AG04449 (cell line): ENCODE measurements at regions of chr4 and their contacts with region 1.

Region 1: GRCh38 chr4:47122592-47123291 is 91.4 kb downstream of the GABRB1 start:
- DNase-seq: no peak
- H3K4me3 ChIP-seq: no peak overlapping the region
- CTCF ChIP-seq: peak; percentile 79

Region 2: DNA sequence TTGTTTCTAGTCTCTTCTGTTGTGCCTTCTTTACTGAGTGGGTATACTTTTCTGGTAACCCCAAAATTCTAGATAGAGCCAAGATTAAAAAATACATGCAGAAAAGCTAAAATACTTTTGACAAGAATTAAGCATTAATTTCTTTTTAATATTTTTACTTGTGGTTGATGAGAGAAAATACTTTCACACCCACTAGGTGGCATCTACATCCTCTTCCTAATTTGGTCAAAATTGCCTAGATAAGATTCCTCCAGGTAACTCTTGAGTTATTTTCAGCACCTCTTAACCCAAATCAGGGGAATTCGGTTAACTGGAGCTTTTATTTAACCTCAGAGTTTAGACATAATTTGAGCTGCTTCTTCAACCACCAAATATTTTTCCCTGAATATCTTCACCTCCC is 185.2 kb before region 1 on chr4:
- CTCF ChIA-PET with region 1: interaction called, 15 read pairs
- POLR2A ChIA-PET with region 1: no interaction called
- DNase-seq: no peak
- H3K4me3 ChIP-seq: no peak overlapping the region
- CTCF ChIP-seq: no peak

Region 3: DNA sequence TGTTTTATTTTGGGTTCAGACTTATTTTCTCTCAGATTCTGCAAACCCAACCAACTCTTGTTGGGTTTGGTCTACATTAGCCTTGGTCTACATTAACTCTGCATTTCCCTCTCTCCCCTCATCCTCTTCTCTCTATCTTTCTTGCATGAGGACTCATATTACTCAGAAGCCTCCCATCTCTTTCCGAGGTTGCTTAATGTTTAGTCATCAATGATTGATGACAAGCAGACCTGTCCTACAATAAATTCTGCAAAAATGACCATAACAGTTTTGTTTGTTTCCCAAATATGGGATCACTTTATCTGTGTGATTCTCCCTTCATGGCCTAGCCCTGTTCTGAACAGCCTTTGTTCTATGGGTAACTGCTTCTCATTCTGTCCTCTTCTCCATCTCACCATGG is 16.2 kb before region 1 on chr4:
- CTCF ChIA-PET with region 1: interaction called, 56 read pairs
- POLR2A ChIA-PET with region 1: no interaction called
- DNase-seq: no peak
- H3K4me3 ChIP-seq: no peak overlapping the region
- CTCF ChIP-seq: no peak

Region 4: DNA sequence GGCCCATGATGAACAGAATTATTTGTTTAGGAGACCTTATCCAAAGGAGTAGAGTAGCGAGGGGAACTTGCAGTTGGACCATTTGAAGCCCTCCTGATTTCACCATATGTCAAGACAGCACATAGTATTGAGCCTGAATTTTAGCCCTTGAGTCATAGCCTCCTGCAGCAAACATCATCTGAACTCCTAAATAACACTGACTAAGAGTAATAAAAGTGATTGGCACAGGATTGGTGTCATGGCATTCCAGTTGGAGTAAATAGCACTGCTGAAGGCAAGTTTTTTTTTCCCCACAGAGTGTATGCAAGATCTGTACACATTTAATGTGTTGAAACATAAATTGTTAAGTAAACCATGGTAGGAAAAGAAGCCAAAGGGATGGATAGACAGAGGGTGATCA is 251.7 kb after region 1 on chr4:
- CTCF ChIA-PET with region 1: interaction called, 12 read pairs
- POLR2A ChIA-PET with region 1: no interaction called
- DNase-seq: peak; percentile 77
- H3K4me3 ChIP-seq: no peak overlapping the region
- CTCF ChIP-seq: no peak